GM10248 (cell line): ENCODE measurements at regions of chr12 and their contacts with region 1.

Region 1: DNA sequence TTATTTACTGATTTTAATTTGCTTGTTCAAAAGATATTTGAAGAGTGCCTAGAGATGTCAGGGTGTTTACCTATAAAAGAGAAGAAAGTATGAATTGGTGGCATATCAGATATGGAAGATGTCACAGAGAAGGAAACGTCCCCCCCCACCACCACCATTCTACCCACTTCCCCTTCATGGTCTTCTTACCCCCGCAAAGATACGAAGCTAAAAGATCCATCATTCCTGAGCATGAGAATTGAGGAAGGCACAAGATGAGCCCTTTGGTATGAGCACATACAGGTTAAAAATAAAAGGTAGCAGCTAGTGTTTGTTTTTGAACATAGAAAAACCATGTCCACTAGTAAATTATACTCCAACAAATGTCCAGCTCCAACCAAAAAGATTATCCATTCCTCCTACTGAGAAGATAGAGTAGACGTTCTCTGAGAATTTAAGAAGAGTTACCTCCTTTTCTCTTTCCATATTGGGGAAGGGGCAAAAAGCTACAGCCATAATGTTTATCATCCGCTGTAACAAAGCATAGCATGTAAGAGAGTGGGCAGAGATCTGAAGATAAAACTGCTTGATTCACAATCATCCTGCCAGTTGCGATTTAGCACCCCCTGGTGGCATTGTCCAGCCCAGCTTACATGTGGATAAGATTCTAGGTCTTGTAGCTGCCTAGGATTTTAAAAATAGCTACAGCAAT is 29.1 kb downstream of the NFYB start:
- DNase-seq: peak; percentile 66
- CTCF ChIP-seq: peak; percentile 87

Region 2: GRCh38 chr12:103771466-103771865 is 337.4 kb before region 1 on chr12:
- CTCF ChIA-PET with region 1: interaction called, 10 read pairs
- POLR2A ChIA-PET with region 1: no interaction called
- DNase-seq: no peak
- CTCF ChIP-seq: peak; percentile 39

Region 3: GRCh38 chr12:103901518-103902173 is 207.3 kb before region 1 on chr12:
- CTCF ChIA-PET with region 1: interaction called, 11 read pairs
- POLR2A ChIA-PET with region 1: no interaction called
- DNase-seq: no peak
- CTCF ChIP-seq: no peak

Region 4: DNA sequence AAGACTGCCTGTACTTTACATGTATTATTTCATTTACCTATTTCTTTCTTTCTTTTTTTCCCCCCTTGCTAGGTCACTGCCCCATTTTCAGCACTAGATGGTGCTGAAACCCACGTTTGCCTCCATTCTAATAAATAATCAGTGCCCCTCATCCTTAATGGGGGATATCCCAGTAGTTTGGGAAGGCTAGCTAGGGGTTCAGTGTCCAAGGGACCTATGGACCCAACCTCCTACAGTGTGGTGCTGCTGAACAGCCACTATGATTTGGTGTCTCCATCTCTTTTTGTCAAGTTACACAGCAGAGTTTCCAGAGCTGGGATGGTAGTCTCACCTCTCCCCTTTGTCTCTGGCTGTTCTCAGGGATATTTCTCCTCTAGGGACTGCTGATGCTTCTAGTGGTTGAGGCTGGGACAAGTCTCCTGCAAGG is 51.1 kb before region 1 on chr12:
- CTCF ChIA-PET with region 1: interaction called, 37 read pairs
- POLR2A ChIA-PET with region 1: no interaction called
- DNase-seq: peak; percentile 27
- CTCF ChIP-seq: peak; percentile 78

Region 5: GRCh38 chr12:104090687-104091086 is 18.2 kb before region 1 on chr12:
- CTCF ChIA-PET with region 1: interaction called, 22 read pairs
- POLR2A ChIA-PET with region 1: no interaction called
- DNase-seq: no peak
- CTCF ChIP-seq: no peak

Region 6: DNA sequence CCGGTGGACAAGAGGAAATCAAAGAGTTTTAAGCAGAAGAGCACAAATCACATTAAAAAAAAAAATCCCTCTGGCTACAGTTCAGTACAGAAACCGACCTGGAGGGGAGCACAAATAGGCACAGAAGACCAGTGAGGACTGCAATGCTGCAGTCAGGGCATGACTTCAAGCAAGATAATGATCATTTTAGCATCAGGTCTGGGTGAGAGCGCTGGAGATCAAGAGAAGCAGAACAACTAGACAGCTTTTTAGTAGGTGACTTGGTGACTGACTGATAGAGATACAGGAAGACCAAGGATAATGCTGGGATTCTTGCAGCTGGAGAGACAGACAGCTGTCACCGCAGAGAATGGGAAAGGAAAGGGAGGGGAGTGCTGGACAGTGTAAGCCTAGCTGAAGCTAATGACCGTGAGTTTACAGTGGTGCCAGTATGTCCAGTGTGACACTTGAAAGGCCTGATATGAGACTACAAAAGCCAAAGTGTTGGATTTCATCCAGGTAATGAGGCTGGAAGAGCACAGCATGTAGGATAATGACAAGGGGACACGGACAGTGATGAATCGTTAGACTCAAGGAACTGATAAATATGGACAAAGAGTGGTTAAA is 23.6 kb after region 1 on chr12:
- CTCF ChIA-PET with region 1: interaction called, 72 read pairs
- POLR2A ChIA-PET with region 1: no interaction called
- DNase-seq: no peak
- CTCF ChIP-seq: no peak

Region 7: GRCh38 chr12:104263580-104264358 is 154.9 kb after region 1 on chr12:
- CTCF ChIA-PET with region 1: no interaction called
- POLR2A ChIA-PET with region 1: no interaction called
- DNase-seq: no peak
- CTCF ChIP-seq: no peak